ENCODE measurements at regions of chr15 and their contacts with region 1.

Region 1: DNA sequence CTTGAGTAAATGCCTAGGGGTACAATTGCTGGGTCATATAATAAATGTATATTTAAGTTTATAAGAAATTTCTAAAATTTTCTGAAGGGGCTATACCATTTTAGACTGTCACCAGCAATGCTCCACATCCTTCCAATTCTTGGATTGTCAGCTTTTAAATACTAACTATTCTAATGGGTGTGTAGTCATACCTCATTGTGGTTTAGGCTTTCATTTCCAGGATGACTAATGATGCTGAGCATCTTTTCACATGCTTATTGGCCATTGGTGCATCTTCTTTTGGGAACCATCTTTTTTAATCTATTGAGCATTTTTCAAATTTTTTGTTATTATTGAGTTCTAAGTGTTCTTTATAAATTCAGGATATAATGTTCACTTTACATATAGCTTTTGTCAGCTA is 52.5 kb upstream of the CORO2B start:
- DNase-seq: no peak

Region 2: GRCh38 chr15:68418611-68419161 is 107.6 kb before region 1 on chr15:
- intact Hi-C with region 1: loop called (anchors 10 kb)
- DNase-seq: peak; percentile 77

Region 3: GRCh38 chr15:68637767-68638404 is 111.6 kb after region 1 on chr15:
- intact Hi-C with region 1: no loop called
- DNase-seq: peak; percentile 88